GM12878 (cell line): ENCODE measurements at regions of chr21 and their contacts with region 1.

Region 1: DNA sequence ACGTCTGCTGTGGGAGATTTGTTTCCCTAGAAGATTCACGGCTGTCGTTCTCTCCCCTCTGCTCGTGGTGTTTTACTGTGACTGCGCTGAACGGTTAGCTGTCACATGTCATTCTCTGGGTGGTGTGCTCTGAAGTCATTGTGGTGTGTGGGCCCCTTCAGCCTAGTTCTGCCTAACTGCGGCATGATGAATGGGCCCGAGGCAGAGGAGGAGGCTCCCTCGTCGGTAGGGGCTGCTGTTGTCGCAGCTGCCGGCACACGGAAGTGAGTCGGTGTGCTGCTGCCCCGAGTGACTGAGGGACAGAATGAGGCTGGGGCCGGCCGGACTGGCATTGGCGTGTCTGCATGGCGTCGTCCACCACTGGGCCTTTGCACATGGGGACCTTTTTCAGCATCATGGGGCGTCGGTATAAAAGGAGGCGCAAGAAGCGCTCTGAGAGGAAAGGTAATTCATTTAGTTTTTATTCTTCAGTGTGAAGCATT is 77.9 kb downstream of the ADARB1 start:
- DNase-seq: no peak
- ATAC-seq: peak; percentile 97
- H3K4me3 ChIP-seq: no peak overlapping the region
- H3K27ac ChIP-seq: no peak overlapping the region
- H3K4me1 ChIP-seq: 0 out of 2 replicates have a peak, but pooled peaks cover 4% of the 10 kb centered on the region
- H3K27me3 ChIP-seq: 0 out of 4 replicates have a peak, but pooled peaks cover 0 to 2% of the 10 kb centered on the region in 2 experiments
- CTCF ChIP-seq: peak; percentile 68 to 95 (median 88); a peak in 5 of 6 replicates
- EP300 ChIP-seq: peak in 1 of 2 experiments; percentile 43; a peak in 2 of 4 replicates
- POLR2A ChIP-seq: peak; percentile 28; the same call in 1 of the 2 replicates
- RAD21 ChIP-seq: peak; percentile 59

Region 2: GRCh38 chr21:44972821-44973220 is 179.5 kb before region 1 on chr21:
- CTCF ChIA-PET with region 1: no interaction called
- POLR2A ChIA-PET with region 1: no interaction called
- RAD21 ChIA-PET with region 1: no interaction called
- SMC1A ChIA-PET with region 1: no interaction called
- in situ Hi-C with region 1: no loop called
- intact Hi-C with region 1: no loop called
- DNase-seq: no peak
- ATAC-seq: no peak
- H3K4me3 ChIP-seq: no peak overlapping the region
- H3K27ac ChIP-seq: no peak overlapping the region
- H3K4me1 ChIP-seq: no peaks in the 10 kb centered on the region
- H3K27me3 ChIP-seq: no peaks in the 10 kb centered on the region
- CTCF ChIP-seq: no peak
- EP300 ChIP-seq: no peak
- POLR2A ChIP-seq: no peak
- RAD21 ChIP-seq: no peak

Region 3: DNA sequence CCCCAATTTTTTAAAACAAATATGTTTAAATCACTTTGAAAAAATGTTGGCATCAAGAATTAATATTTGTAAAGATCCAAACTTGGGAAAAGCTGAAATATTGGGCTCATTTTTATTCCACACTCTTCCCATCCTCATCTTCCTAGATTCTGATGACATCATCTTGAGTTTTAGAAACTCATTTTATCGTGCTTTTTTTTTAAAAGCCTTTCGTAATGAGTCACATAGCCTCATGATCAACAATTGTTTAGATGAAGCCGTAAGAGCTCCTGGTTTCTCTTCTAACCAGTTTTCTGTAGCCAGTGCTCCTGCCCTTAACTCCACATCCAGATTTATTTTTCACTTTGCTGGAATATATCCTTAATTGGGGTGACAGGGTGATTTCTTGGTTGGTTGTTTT is 56.7 kb after region 1 on chr21:
- CTCF ChIA-PET with region 1: interaction called, 4 read pairs
- POLR2A ChIA-PET with region 1: no interaction called
- RAD21 ChIA-PET with region 1: no interaction called
- SMC1A ChIA-PET with region 1: interaction called, 3 read pairs
- in situ Hi-C with region 1: no loop called
- intact Hi-C with region 1: loop called (anchors 5 kb)
- DNase-seq: no peak
- ATAC-seq: peak; percentile 64
- H3K4me3 ChIP-seq: no peak overlapping the region
- H3K27ac ChIP-seq: no peak overlapping the region
- H3K4me1 ChIP-seq: peaks cover 34% of the 10 kb centered on the region
- H3K27me3 ChIP-seq: no peaks in the 10 kb centered on the region
- CTCF ChIP-seq: no peak
- EP300 ChIP-seq: peak; percentile 32 to 43; a peak in 1 of 4 replicates
- POLR2A ChIP-seq: no peak
- RAD21 ChIP-seq: no peak

Region 4: GRCh38 chr21:45432575-45433255 is 280.4 kb after region 1 on chr21:
- CTCF ChIA-PET with region 1: interaction called, 3 read pairs
- POLR2A ChIA-PET with region 1: no interaction called
- RAD21 ChIA-PET with region 1: no interaction called
- SMC1A ChIA-PET with region 1: no interaction called
- in situ Hi-C with region 1: no loop called
- intact Hi-C with region 1: loop called (anchors 5 kb)
- DNase-seq: no peak
- ATAC-seq: no peak
- H3K4me3 ChIP-seq: no peak overlapping the region
- H3K27ac ChIP-seq: no peak overlapping the region
- H3K4me1 ChIP-seq: no peaks in the 10 kb centered on the region
- H3K27me3 ChIP-seq: no peaks in the 10 kb centered on the region
- CTCF ChIP-seq: no peak
- EP300 ChIP-seq: no peak
- POLR2A ChIP-seq: no peak
- RAD21 ChIP-seq: no peak

Region 5: GRCh38 chr21:45448810-45449657 is 296.7 kb after region 1 on chr21:
- CTCF ChIA-PET with region 1: no interaction called
- POLR2A ChIA-PET with region 1: no interaction called
- RAD21 ChIA-PET with region 1: no interaction called
- SMC1A ChIA-PET with region 1: no interaction called
- in situ Hi-C with region 1: loop called (anchors 5 kb)
- intact Hi-C with region 1: no loop called
- DNase-seq: no peak
- ATAC-seq: no peak
- H3K4me3 ChIP-seq: no peak overlapping the region
- H3K27ac ChIP-seq: no peak overlapping the region
- H3K4me1 ChIP-seq: no peaks in the 10 kb centered on the region
- H3K27me3 ChIP-seq: no peaks in the 10 kb centered on the region
- CTCF ChIP-seq: no peak
- EP300 ChIP-seq: no peak
- POLR2A ChIP-seq: no peak
- RAD21 ChIP-seq: no peak